ENCODE measurements at regions of chr2 and their contacts with region 1.

Region 1: GRCh38 chr2:55050133-55050994 is at the start of gene RTN4:
- DNase-seq: peak; percentile 98
- ATAC-seq: peak; percentile 85
- H3K4me3 ChIP-seq: peak within 1 kb of the TSS; percentile 89
- H3K27ac ChIP-seq: peak within 1 kb of the TSS; percentile 86
- H3K4me1 ChIP-seq: peaks cover 10% of the 10 kb centered on the region; the same call in 1 of the 2 replicates
- H3K27me3 ChIP-seq: no peaks in the 10 kb centered on the region
- CTCF ChIP-seq: peak in 1 of 3 experiments; percentile 18; a peak in 1 of 6 replicates
- EP300 ChIP-seq: 0 out of 4 replicates have a peak, but pooled peaks of 1 of the 2 experiments have one; percentile 27
- POLR2A ChIP-seq: peak; percentile 100
- RAD21 ChIP-seq: no peak
- polyA plus RNA-seq, gene RTN4: 68.0 to 112 TPM

Region 2: DNA sequence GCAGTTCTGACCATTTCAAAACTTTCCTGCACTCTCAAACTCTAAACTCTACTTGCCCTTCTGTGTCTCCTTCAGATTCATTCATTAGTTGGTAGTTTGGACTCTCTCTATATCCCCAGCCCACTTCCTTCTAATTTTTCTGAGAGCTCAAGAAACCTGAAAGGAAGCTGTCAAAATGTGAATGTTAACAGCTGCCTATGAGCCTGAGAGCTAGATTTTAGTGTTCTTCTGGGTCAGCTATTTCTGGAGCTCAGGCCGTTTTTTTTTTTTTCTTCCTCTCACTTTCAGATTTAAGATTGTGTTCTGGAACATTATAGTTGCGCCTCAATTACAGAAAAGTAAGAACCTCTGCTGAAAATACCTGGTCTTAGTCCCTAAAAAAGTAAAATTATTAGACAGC is 73.2 kb before region 1 on chr2:
- CTCF ChIA-PET with region 1: interaction called, 5 read pairs
- POLR2A ChIA-PET with region 1: interaction called, 11 read pairs
- RAD21 ChIA-PET with region 1: interaction called, 3 read pairs
- SMC1A ChIA-PET with region 1: interaction called, 8 read pairs
- in situ Hi-C with region 1: no loop called
- intact Hi-C with region 1: no loop called
- DNase-seq: peak; percentile 77
- ATAC-seq: peak; percentile 93
- H3K4me3 ChIP-seq: peak overlapping the region; percentile 53; the same call in 1 of the 2 replicates
- H3K27ac ChIP-seq: peak overlapping the region; percentile 74
- H3K4me1 ChIP-seq: peaks cover 26% of the 10 kb centered on the region
- H3K27me3 ChIP-seq: no peaks in the 10 kb centered on the region
- CTCF ChIP-seq: no peak
- EP300 ChIP-seq: peak in 1 of 2 experiments; percentile 23; a peak in 1 of 4 replicates
- POLR2A ChIP-seq: no peak
- RAD21 ChIP-seq: no peak; the same call in 1 of the 2 replicates

Region 3: GRCh38 chr2:55026202-55026601 is 24.2 kb before region 1 on chr2:
- CTCF ChIA-PET with region 1: interaction called, 22 read pairs
- POLR2A ChIA-PET with region 1: interaction called, 9 read pairs
- RAD21 ChIA-PET with region 1: interaction called, 9 read pairs
- SMC1A ChIA-PET with region 1: interaction called, 40 read pairs
- in situ Hi-C with region 1: no loop called
- intact Hi-C with region 1: no loop called
- DNase-seq: no peak
- ATAC-seq: no peak; the same call in 2 of the 3 replicates
- H3K4me3 ChIP-seq: peak overlapping the region; percentile 40; the same call in 1 of the 2 replicates
- H3K27ac ChIP-seq: peak overlapping the region; percentile 69
- H3K4me1 ChIP-seq: peaks cover 26% of the 10 kb centered on the region
- H3K27me3 ChIP-seq: no peaks in the 10 kb centered on the region
- CTCF ChIP-seq: no peak
- EP300 ChIP-seq: no peak
- POLR2A ChIP-seq: no peak
- RAD21 ChIP-seq: no peak

Region 4: DNA sequence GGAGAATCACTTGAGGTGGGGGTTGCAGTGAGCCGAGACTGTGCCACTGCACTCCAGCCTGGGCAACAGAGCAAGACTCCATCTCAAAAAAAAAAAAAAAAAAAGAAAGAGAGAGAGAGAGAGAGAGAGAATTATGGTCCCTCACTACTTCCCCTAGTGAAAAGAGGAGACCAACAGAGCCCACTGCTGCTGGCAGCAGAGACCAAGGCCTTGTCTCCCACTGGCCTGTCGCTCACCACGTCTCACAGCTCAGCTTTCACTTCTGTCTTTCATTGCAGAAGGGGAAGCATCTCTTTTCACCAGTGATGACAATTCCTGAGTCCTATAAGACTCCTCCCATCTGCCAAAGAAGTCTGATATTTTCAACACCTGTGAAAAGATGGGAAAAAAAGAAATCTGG is 100.5 kb after region 1 on chr2:
- CTCF ChIA-PET with region 1: interaction called, 10 read pairs
- POLR2A ChIA-PET with region 1: interaction called, 8 read pairs
- RAD21 ChIA-PET with region 1: interaction called, 6 read pairs
- SMC1A ChIA-PET with region 1: interaction called, 11 read pairs
- in situ Hi-C with region 1: no loop called
- intact Hi-C with region 1: no loop called
- DNase-seq: no peak
- ATAC-seq: peak; percentile 80
- H3K4me3 ChIP-seq: no peak overlapping the region
- H3K27ac ChIP-seq: no peak overlapping the region
- H3K4me1 ChIP-seq: peaks cover 18% of the 10 kb centered on the region
- H3K27me3 ChIP-seq: no peaks in the 10 kb centered on the region
- CTCF ChIP-seq: no peak
- EP300 ChIP-seq: no peak
- POLR2A ChIP-seq: no peak
- RAD21 ChIP-seq: no peak

Region 5: GRCh38 chr2:55175254-55176025 is 125.1 kb after region 1 on chr2:
- CTCF ChIA-PET with region 1: interaction called, 146 read pairs
- POLR2A ChIA-PET with region 1: interaction called, 3 read pairs
- RAD21 ChIA-PET with region 1: interaction called, 107 read pairs
- SMC1A ChIA-PET with region 1: interaction called, 47 read pairs
- in situ Hi-C with region 1: no loop called
- intact Hi-C with region 1: no loop called
- DNase-seq: no peak
- ATAC-seq: peak; percentile 86
- H3K4me3 ChIP-seq: no peak overlapping the region
- H3K27ac ChIP-seq: no peak overlapping the region
- H3K4me1 ChIP-seq: no peaks in the 10 kb centered on the region
- H3K27me3 ChIP-seq: no peaks in the 10 kb centered on the region
- CTCF ChIP-seq: peak; percentile 39 to 68 (median 56); a peak in 4 of 6 replicates
- EP300 ChIP-seq: no peak
- POLR2A ChIP-seq: no peak
- RAD21 ChIP-seq: peak; percentile 82